Activated B cell treated with CpG ODN at 0.5 μM for 24 hours (primary cell): ENCODE measurements at regions of chr10 and their contacts with region 1.

Region 1: DNA sequence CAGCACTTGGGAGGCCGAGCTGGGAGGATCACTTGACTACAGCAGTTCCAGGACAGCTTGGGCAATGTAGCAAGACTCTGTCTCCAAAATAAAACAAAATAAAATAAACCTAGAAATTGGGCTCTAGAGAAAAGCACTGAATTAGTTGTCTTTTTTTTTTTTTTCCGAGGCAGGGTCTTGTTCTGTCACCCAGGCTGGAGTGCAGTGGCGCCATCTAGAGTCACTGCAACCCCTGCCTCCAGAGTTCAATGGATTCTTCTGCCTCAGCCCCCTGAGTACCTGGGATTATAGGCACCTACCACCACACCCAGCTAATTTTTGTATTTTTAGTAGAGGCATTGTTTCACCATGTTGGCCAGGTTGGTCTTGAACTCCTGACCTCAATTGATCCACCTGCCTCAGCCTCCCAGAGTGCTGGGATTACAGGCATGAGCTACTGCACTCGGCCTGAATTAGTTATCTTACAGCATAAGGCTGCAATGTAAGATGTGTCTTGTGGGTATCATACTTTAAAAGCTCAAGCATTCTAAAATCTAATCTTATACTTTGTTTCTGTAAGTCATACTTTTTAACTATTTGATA is 12.8 kb downstream of the MEIG1 start:
- DNase-seq: no peak
- ATAC-seq: peak; percentile 70
- H3K4me3 Mint-ChIP-seq: no peak overlapping the region
- H3K27ac Mint-ChIP-seq: no peak overlapping the region
- H3K4me1 Mint-ChIP-seq: peaks cover 5% of the 10 kb centered on the region
- H3K27me3 Mint-ChIP-seq: peaks cover 6% of the 10 kb centered on the region
- CTCF ChIP-seq: peak; percentile 39

Region 2: GRCh38 chr10:13371897-13372470 is 1600.0 kb before region 1 on chr10:
- CTCF ChIA-PET with region 1: no interaction called
- POLR2A ChIA-PET with region 1: no interaction called
- intact Hi-C with region 1: loop called (anchors 5 kb)
- DNase-seq: peak; percentile 33
- ATAC-seq: peak; percentile 97
- H3K4me3 Mint-ChIP-seq: no peak overlapping the region
- H3K27ac Mint-ChIP-seq: no peak overlapping the region
- H3K4me1 Mint-ChIP-seq: no peaks in the 10 kb centered on the region
- H3K27me3 Mint-ChIP-seq: peaks cover 2% of the 10 kb centered on the region
- CTCF ChIP-seq: peak; percentile 77

Region 3: DNA sequence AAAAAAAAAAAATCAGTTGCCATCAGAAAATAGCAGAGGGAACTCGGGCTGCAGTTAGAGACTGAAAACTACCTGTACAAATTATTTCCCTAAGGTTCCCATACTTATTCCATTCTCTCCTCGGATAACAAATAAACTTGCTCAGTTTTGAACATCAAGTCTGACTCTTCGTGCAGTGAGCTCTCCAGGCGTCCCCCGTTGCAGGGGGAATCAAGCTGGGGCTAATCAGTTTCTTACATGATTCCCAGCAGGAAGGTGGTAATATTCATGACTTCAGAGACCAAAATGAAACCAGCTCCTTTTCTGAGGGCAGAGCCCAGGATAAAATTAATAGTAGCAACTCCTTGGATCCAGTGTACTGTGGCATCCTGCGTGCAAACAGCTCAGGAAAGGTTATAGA is 776.5 kb before region 1 on chr10:
- CTCF ChIA-PET with region 1: interaction called, 13 read pairs
- POLR2A ChIA-PET with region 1: no interaction called
- intact Hi-C with region 1: loop called (anchors 1 kb)
- DNase-seq: no peak
- ATAC-seq: no peak
- H3K4me3 Mint-ChIP-seq: no peak overlapping the region
- H3K27ac Mint-ChIP-seq: no peak overlapping the region
- H3K4me1 Mint-ChIP-seq: peaks cover 5% of the 10 kb centered on the region
- H3K27me3 Mint-ChIP-seq: peaks cover 36% of the 10 kb centered on the region
- CTCF ChIP-seq: no peak

Region 4: GRCh38 chr10:14200698-14201544 is 771.0 kb before region 1 on chr10:
- CTCF ChIA-PET with region 1: interaction called, 13 read pairs
- POLR2A ChIA-PET with region 1: no interaction called
- intact Hi-C with region 1: loop called (anchors 1 kb)
- DNase-seq: no peak
- ATAC-seq: no peak
- H3K4me3 Mint-ChIP-seq: no peak overlapping the region
- H3K27ac Mint-ChIP-seq: no peak overlapping the region
- H3K4me1 Mint-ChIP-seq: no peaks in the 10 kb centered on the region
- H3K27me3 Mint-ChIP-seq: peaks cover 22% of the 10 kb centered on the region
- CTCF ChIP-seq: no peak

Region 5: DNA sequence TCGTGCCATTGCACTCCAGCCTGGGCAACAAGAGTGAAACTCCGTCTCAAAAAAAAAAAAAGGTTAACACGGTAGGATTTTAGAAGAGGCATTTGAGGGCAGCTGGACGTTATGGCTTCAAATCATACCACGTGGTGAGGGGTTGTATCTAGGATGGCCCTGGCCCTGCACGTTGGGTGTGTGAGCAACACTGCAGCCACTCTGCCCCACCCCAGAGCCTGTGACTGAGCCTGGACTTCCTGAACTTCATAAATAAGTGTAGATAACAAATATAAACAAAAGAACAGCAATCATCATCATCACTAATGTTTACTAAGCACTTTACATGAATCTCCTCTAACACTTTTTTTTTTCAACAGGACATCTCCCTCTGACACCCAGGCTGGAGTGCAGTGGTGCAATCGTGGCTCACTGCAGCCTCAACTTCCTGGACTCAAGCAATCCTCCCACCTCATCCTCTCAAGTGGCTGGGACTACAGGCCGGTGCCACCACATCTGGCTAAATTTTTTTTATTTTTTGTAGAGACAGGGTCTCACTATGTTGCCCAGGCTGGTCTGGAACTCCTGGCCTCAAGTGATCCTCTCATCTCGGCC is 471.7 kb before region 1 on chr10:
- CTCF ChIA-PET with region 1: interaction called, 14 read pairs
- POLR2A ChIA-PET with region 1: no interaction called
- intact Hi-C with region 1: loop called (anchors 1 kb)
- DNase-seq: no peak
- ATAC-seq: no peak
- H3K4me3 Mint-ChIP-seq: no peak overlapping the region
- H3K27ac Mint-ChIP-seq: no peak overlapping the region
- H3K4me1 Mint-ChIP-seq: peaks cover 18% of the 10 kb centered on the region
- H3K27me3 Mint-ChIP-seq: no peaks in the 10 kb centered on the region
- CTCF ChIP-seq: no peak

Region 6: DNA sequence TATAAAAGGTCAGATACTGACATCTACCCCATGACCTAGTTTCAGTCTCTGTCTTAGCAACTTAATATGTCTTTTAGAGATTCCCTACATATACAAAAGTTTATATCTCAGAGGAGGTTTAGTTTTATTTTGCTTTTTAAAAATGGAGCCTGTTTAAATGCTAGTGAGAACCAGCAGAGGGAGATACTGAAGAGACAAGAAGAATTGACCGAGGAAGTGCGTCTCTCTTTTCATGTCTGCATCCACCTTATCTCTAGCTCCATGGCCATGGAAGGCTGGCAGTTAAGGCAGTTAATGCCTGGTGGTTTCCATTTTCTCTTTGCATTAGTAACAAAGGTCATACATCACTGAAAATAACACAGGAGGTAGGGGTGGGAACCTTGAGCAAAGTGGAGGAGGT is 82.6 kb before region 1 on chr10:
- CTCF ChIA-PET with region 1: interaction called, 7 read pairs
- POLR2A ChIA-PET with region 1: no interaction called
- intact Hi-C with region 1: loop called (anchors 2 kb)
- DNase-seq: no peak
- ATAC-seq: no peak
- H3K4me3 Mint-ChIP-seq: no peak overlapping the region
- H3K27ac Mint-ChIP-seq: no peak overlapping the region
- H3K4me1 Mint-ChIP-seq: no peaks in the 10 kb centered on the region
- H3K27me3 Mint-ChIP-seq: no peaks in the 10 kb centered on the region
- CTCF ChIP-seq: no peak

Region 7: DNA sequence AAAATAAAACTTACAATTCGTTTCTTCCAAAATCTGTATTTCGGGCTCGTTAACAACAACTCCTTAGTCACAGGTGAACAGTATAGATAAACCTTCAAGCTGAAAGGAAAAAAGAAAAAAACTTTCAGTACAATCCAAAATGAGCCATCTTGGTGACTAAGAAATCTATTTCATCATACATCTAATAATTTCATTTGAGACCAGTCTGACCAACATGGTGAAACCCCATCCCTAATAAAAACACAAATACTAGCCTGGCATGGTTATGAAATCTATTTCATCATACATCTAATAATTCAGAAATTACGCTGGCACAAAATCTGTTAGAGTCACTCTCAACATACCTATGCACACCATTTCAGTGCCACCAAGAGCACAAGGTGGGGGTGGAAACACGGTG is 26.9 kb before region 1 on chr10:
- CTCF ChIA-PET with region 1: no interaction called
- POLR2A ChIA-PET with region 1: no interaction called
- intact Hi-C with region 1: no loop called
- DNase-seq: no peak
- ATAC-seq: no peak
- H3K4me3 Mint-ChIP-seq: no peak overlapping the region
- H3K27ac Mint-ChIP-seq: no peak overlapping the region
- H3K4me1 Mint-ChIP-seq: peaks cover 24% of the 10 kb centered on the region
- H3K27me3 Mint-ChIP-seq: no peaks in the 10 kb centered on the region
- CTCF ChIP-seq: no peak

Region 8: GRCh38 chr10:14959276-14960057 is 12.5 kb before region 1 on chr10 and contains the start of gene MEIG1:
- CTCF ChIA-PET with region 1: interaction called, 16 read pairs
- POLR2A ChIA-PET with region 1: interaction called, 3 read pairs
- intact Hi-C with region 1: no loop called
- DNase-seq: peak; percentile 100
- ATAC-seq: peak; percentile 83
- H3K4me3 Mint-ChIP-seq: peak within 1 kb of the TSS; percentile 97
- H3K27ac Mint-ChIP-seq: peak within 1 kb of the TSS; percentile 98
- H3K4me1 Mint-ChIP-seq: peaks cover 14% of the 10 kb centered on the region
- H3K27me3 Mint-ChIP-seq: no peaks in the 10 kb centered on the region
- CTCF ChIP-seq: no peak
- total RNA-seq, gene MEIG1: 0.49 and 0.54 TPM in 2 replicates